PC-3 (cell line): ENCODE measurements at regions of chr14 and their contacts with region 1.

Region 1: DNA sequence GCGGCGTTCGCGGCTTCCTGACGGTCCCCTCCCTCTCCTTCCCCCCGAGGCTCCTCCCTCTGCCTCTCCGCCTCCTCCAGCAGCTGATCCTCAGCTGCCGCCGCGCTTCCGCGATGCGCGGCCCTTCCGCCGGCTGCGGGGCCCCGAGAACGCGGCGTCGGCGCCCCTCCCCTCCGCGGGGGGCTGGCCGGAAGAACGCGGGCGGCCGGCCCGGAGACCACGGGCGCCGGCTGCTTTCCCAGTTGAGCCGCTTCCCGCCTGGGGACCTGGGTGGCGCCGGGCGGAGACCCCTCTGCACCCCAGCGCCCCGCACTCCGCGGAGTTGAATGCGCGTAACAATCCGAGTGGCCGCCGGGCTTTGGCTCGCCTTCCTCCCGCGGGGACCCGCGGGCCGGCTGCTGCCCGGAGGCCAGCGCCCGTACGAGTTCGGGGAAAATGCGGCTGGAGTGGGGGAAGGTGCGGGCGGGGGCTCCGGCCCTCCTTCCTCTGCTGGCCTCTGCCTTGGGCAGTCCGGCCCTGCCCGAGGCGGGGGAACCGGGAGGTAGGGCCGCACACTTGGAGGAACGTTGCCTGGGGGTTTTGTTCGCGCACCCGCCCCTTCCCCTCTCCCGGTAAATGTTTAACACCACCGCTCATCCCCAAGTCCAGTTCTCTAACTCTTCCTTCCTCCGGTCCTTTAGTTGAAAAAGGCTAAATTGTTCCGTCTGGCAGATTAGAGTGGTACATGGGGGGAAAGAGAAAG is 383 bp upstream of the DCAF5 start:
- DNase-seq: peak; percentile 91
- ATAC-seq: peak; percentile 82
- H3K4me3 ChIP-seq: peak overlapping the region; percentile 94
- H3K27ac ChIP-seq: no peak overlapping the region
- H3K4me1 ChIP-seq: peaks cover 43% of the 10 kb centered on the region
- H3K27me3 ChIP-seq: no peaks in the 10 kb centered on the region
- CTCF ChIP-seq: no peak

Region 2: DNA sequence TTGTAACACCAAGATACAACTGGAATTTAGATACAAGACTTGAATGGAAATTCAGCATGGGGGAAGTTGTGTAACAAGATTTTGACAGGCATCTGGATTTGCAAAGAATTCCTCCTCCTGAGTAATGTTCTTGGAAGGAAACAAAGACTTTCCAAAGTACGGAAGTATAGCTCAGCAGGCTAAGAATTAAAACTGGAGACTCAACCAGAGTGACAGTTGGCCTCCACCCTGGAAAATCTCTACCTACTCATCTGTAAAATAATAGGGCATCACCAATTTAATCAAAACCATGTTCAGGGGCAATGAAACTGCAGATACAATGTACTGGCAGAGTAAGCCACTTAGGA is 15.1 kb before region 1 on chr14:
- CTCF ChIA-PET with region 1: no interaction called
- POLR2A ChIA-PET with region 1: no interaction called
- intact Hi-C with region 1: loop called (anchors 1 kb)
- DNase-seq: no peak
- ATAC-seq: no peak
- H3K4me3 ChIP-seq: no peak overlapping the region
- H3K27ac ChIP-seq: no peak overlapping the region
- H3K4me1 ChIP-seq: peaks cover 23% of the 10 kb centered on the region
- H3K27me3 ChIP-seq: no peaks in the 10 kb centered on the region
- CTCF ChIP-seq: no peak

Region 3: DNA sequence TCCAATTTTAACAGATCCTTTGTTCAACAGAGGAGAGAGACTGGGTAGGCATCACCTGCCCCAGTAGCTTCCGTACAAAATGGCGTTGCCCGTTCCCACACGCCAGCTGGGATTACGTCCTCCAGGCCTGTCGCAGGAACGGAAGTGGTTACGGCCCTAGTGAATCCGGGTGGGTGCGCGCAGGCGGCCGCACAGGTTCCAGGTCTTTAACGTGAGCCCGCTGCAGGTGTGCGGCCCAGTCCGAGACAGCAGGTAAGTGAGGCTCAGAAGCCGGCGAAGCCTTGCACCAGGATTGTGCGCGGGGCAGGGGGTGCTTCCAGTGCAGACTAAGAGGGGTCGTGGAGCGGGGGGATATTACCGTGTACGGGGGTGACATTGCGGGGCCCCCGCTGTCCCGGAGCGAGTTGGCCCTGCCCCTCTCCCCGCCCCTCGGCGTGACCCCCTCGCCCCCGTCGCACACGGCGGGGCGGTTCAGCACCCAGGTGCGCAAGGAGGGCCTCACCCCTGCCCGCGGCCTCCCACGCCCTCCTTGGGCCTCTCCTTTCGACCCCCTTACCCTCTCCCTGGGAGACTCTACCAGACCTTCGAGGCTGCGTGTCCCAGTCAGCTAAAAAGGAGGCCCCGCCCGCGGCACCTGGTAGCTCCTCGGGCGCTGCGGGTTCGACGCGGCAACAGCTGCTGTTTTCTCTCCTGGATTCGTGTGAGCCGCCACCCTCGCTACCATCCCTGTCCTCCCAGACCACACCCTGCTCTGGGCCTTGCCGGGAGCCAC is 38.2 kb after region 1 on chr14 and contains the start of gene EXD2:
- CTCF ChIA-PET with region 1: interaction called, 4 read pairs
- POLR2A ChIA-PET with region 1: no interaction called
- intact Hi-C with region 1: loop called (anchors 1 kb)
- DNase-seq: peak; percentile 95
- ATAC-seq: peak; percentile 97
- H3K4me3 ChIP-seq: peak within 1 kb of the TSS; percentile 84
- H3K27ac ChIP-seq: peak within 1 kb of the TSS; percentile 56
- H3K4me1 ChIP-seq: peaks cover 13% of the 10 kb centered on the region
- H3K27me3 ChIP-seq: no peaks in the 10 kb centered on the region
- CTCF ChIP-seq: no peak
- total RNA-seq, gene EXD2: 19.0 and 19.9 TPM in 2 replicates

Region 4: GRCh38 chr14:69214393-69214792 is 61.1 kb after region 1 on chr14:
- CTCF ChIA-PET with region 1: no interaction called
- POLR2A ChIA-PET with region 1: interaction called, 3 read pairs
- intact Hi-C with region 1: loop called (anchors 1 kb)
- DNase-seq: peak; percentile 31
- ATAC-seq: peak; percentile 100
- H3K4me3 ChIP-seq: no peak overlapping the region
- H3K27ac ChIP-seq: 0 out of 2 replicates have a peak overlapping the region, but pooled peaks have one; percentile 3
- H3K4me1 ChIP-seq: peaks cover 8% of the 10 kb centered on the region; the same call in 1 of the 2 replicates
- H3K27me3 ChIP-seq: no peaks in the 10 kb centered on the region
- CTCF ChIP-seq: no peak